WTC11 (cell line): ENCODE measurements at regions of chr9 and their contacts with region 1.

Region 1: GRCh38 chr9:104991144-104991953 is 63.4 kb upstream of the ABCA1 start:
- DNase-seq: peak; percentile 86
- ATAC-seq: peak; percentile 52
- H3K4me3 Mint-ChIP-seq: peak overlapping the region; percentile 80
- H3K27ac Mint-ChIP-seq: peak overlapping the region; percentile 92
- H3K4me1 Mint-ChIP-seq: peaks cover 44% of the 10 kb centered on the region
- H3K27me3 Mint-ChIP-seq: peaks cover 54% of the 10 kb centered on the region
- CTCF ChIP-seq: no peak

Region 2: GRCh38 chr9:104961238-104961637 is 30.1 kb before region 1 on chr9:
- CTCF ChIA-PET with region 1: interaction called, 5 read pairs
- POLR2A ChIA-PET with region 1: interaction called, 13 read pairs
- DNase-seq: peak; percentile 56
- ATAC-seq: peak; percentile 99
- H3K4me3 Mint-ChIP-seq: peak overlapping the region; percentile 27; the same call in 1 of the 2 replicates
- H3K27ac Mint-ChIP-seq: peak overlapping the region; percentile 90; the same call in 1 of the 2 replicates
- H3K4me1 Mint-ChIP-seq: peaks cover 40% of the 10 kb centered on the region
- H3K27me3 Mint-ChIP-seq: no peaks in the 10 kb centered on the region
- CTCF ChIP-seq: no peak

Region 3: GRCh38 chr9:104968025-104968982 is 23.0 kb before region 1 on chr9:
- CTCF ChIA-PET with region 1: interaction called, 3 read pairs
- POLR2A ChIA-PET with region 1: interaction called, 34 read pairs
- DNase-seq: peak; percentile 86
- ATAC-seq: peak; percentile 84
- H3K4me3 Mint-ChIP-seq: peak overlapping the region; percentile 95
- H3K27ac Mint-ChIP-seq: peak overlapping the region; percentile 63
- H3K4me1 Mint-ChIP-seq: peaks cover 33% of the 10 kb centered on the region
- H3K27me3 Mint-ChIP-seq: peaks cover 3% of the 10 kb centered on the region; the same call in 1 of the 2 replicates
- CTCF ChIP-seq: no peak